CD4-positive, alpha-beta memory T cell (primary cell): ENCODE measurements at regions of chr3 and their contacts with region 1.

Region 1: DNA sequence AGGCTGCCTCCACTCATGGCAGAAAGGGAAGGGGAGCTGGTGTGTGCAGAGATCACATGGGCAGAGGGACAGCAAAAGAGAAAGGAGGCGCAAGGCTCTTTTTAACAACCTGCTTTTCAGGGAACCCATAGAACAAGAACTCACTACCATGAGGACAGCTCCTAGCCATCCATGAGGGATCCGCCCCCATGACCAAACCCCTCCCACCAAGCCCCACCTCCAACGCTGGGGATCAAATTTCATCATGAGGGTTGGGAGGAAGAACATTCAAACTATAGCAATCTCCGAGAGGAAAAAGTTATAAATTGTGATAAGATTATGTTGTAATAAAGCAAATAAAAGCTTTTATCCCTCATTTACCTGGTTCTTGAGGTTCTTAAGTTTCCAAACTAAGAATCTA is 84.7 kb upstream of the LMCD1 start:
- DNase-seq: no peak
- H3K4me3 ChIP-seq: no peak overlapping the region
- H3K4me3 Mint-ChIP-seq: peak overlapping the region in 1 of 8 donors; percentile 7
- H3K27ac ChIP-seq: no peak overlapping the region
- H3K27ac Mint-ChIP-seq: peak overlapping the region in 3 of 7 donors; percentile 39 to 77 (median 48)
- H3K4me1 ChIP-seq: peaks cover 8% of the 10 kb centered on the region
- H3K4me1 Mint-ChIP-seq: peaks cover 6 to 10% (median 6%) of the 10 kb centered on the region in 4 donors
- H3K27me3 ChIP-seq: no peaks in the 10 kb centered on the region
- H3K27me3 Mint-ChIP-seq: no peaks in the 10 kb centered on the region

Region 2: GRCh38 chr3:7800006-7800780 is 616.8 kb before region 1 on chr3:
- CTCF ChIA-PET with region 1: interaction called, 12 read pairs
- POLR2A ChIA-PET with region 1: no interaction called
- intact Hi-C with region 1: loop called (anchors 2 kb)
- DNase-seq: peak in 4 of 5 donors; percentile 16 to 34 (median 20)
- H3K4me3 ChIP-seq: no peak overlapping the region
- H3K4me3 Mint-ChIP-seq: no peak overlapping the region
- H3K27ac ChIP-seq: no peak overlapping the region
- H3K27ac Mint-ChIP-seq: no peak overlapping the region
- H3K4me1 ChIP-seq: no peaks in the 10 kb centered on the region
- H3K4me1 Mint-ChIP-seq: peaks cover 0 to 2% (median 0%) of the 10 kb centered on the region in 4 donors
- H3K27me3 ChIP-seq: no peaks in the 10 kb centered on the region
- H3K27me3 Mint-ChIP-seq: no peaks in the 10 kb centered on the region

Region 3: DNA sequence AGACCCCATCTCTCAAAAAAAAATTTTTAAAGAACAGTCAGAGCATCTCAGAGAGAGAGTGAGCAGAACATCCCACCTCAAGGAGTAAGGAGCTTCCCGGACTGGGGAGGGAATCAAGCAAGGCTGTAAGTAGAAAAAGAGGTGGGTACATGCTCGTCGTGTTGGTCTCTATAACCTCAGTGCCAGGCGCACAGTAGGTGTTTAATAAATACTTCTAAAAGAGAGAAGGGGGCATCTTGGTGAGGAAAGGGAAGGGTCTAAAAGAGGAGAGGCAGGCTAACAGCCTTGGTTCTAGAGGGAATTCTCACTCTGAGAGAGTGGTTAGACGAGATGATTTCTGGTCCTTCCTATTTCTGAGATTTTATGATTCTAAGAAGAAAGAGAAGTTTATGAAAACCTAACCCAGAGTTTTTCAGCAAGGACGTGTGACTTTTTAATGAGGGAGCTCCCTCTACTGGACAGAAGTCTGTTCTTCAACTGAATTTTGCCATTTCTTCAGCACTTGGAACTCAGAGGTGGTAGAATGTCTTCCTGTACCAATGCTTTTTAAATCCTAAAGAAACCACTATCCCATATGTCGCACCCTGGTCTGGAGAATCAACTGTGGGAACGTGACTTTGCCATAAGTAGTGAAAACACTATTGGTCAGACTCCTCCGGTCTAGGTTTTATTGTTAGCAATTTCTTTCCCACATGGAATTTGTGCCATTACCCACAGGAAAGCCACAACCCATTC is 115.1 kb before region 1 on chr3:
- CTCF ChIA-PET with region 1: interaction called, 25 read pairs
- POLR2A ChIA-PET with region 1: interaction called, 4 read pairs
- intact Hi-C with region 1: no loop called
- DNase-seq: peak in 4 of 5 donors; percentile 33 to 50 (median 37)
- H3K4me3 ChIP-seq: no peak overlapping the region
- H3K4me3 Mint-ChIP-seq: no peak overlapping the region
- H3K27ac ChIP-seq: no peak overlapping the region
- H3K27ac Mint-ChIP-seq: peak overlapping the region in 3 of 7 donors; percentile 19 to 68 (median 67)
- H3K4me1 ChIP-seq: no peaks in the 10 kb centered on the region
- H3K4me1 Mint-ChIP-seq: peaks cover 4 to 9% (median 7%) of the 10 kb centered on the region in 4 donors
- H3K27me3 ChIP-seq: no peaks in the 10 kb centered on the region
- H3K27me3 Mint-ChIP-seq: peaks cover 1 to 4% of the 10 kb centered on the region in 2 donors

Region 4: GRCh38 chr3:8336456-8336855 is 80.5 kb before region 1 on chr3:
- CTCF ChIA-PET with region 1: interaction called, 10 read pairs
- POLR2A ChIA-PET with region 1: no interaction called
- intact Hi-C with region 1: no loop called
- DNase-seq: no peak
- H3K4me3 ChIP-seq: no peak overlapping the region
- H3K4me3 Mint-ChIP-seq: no peak overlapping the region
- H3K27ac ChIP-seq: no peak overlapping the region
- H3K27ac Mint-ChIP-seq: peak overlapping the region in 2 of 7 donors; percentile 10 to 47
- H3K4me1 ChIP-seq: no peaks in the 10 kb centered on the region
- H3K4me1 Mint-ChIP-seq: peaks cover 0 to 6% (median 4%) of the 10 kb centered on the region in 4 donors
- H3K27me3 ChIP-seq: no peaks in the 10 kb centered on the region
- H3K27me3 Mint-ChIP-seq: peaks cover 0 to 2% of the 10 kb centered on the region in 2 donors

Region 5: GRCh38 chr3:8400911-8401310 is 16.1 kb before region 1 on chr3:
- CTCF ChIA-PET with region 1: interaction called, 23 read pairs
- POLR2A ChIA-PET with region 1: no interaction called
- intact Hi-C with region 1: no loop called
- DNase-seq: no peak
- H3K4me3 ChIP-seq: no peak overlapping the region
- H3K4me3 Mint-ChIP-seq: no peak overlapping the region
- H3K27ac ChIP-seq: no peak overlapping the region
- H3K27ac Mint-ChIP-seq: no peak overlapping the region
- H3K4me1 ChIP-seq: no peaks in the 10 kb centered on the region
- H3K4me1 Mint-ChIP-seq: peaks cover 0 to 2% (median 0%) of the 10 kb centered on the region in 4 donors
- H3K27me3 ChIP-seq: no peaks in the 10 kb centered on the region
- H3K27me3 Mint-ChIP-seq: peaks cover 0 to 5% of the 10 kb centered on the region in 2 donors